CD4-positive, alpha-beta memory T cell (primary cell): ENCODE measurements at regions of chr19 and their contacts with region 1.

Region 1: GRCh38 chr19:49570138-49570856 is 10.1 kb downstream of the NOSIP start:
- DNase-seq: peak; percentile 82 to 85 (median 84)
- H3K4me3 ChIP-seq: no peak overlapping the region
- H3K4me3 Mint-ChIP-seq: peak overlapping the region; percentile 68 to 91 (median 78)
- H3K27ac ChIP-seq: no peak overlapping the region
- H3K27ac Mint-ChIP-seq: peak overlapping the region; percentile 90 to 98 (median 95)
- H3K4me1 ChIP-seq: peaks cover 64% of the 10 kb centered on the region
- H3K4me1 Mint-ChIP-seq: peaks cover 34 to 64% (median 47%) of the 10 kb centered on the region in 4 donors
- H3K27me3 ChIP-seq: no peaks in the 10 kb centered on the region
- H3K27me3 Mint-ChIP-seq: no peaks in the 10 kb centered on the region

Region 2: GRCh38 chr19:49473868-49474544 is 96.3 kb before region 1 on chr19 and contains the start of gene FLT3LG:
- CTCF ChIA-PET with region 1: interaction called, 17 read pairs
- POLR2A ChIA-PET with region 1: interaction called, 13 read pairs
- intact Hi-C with region 1: loop called (anchors 1 kb)
- DNase-seq: peak; percentile 96 to 97 (median 97)
- H3K4me3 ChIP-seq: peak within 1 kb of the TSS; percentile 77 to 94
- H3K4me3 Mint-ChIP-seq: peak within 1 kb of the TSS; percentile 90 to 99 (median 94)
- H3K27ac ChIP-seq: peak within 1 kb of the TSS; percentile 96
- H3K27ac Mint-ChIP-seq: peak within 1 kb of the TSS; percentile 91 to 99 (median 98)
- H3K4me1 ChIP-seq: peaks cover 64% of the 10 kb centered on the region
- H3K4me1 Mint-ChIP-seq: peaks cover 27 to 71% (median 46%) of the 10 kb centered on the region in 4 donors
- H3K27me3 ChIP-seq: no peaks in the 10 kb centered on the region
- H3K27me3 Mint-ChIP-seq: no peaks in the 10 kb centered on the region
- total RNA-seq, gene FLT3LG: 114 to 115 TPM

Region 3: DNA sequence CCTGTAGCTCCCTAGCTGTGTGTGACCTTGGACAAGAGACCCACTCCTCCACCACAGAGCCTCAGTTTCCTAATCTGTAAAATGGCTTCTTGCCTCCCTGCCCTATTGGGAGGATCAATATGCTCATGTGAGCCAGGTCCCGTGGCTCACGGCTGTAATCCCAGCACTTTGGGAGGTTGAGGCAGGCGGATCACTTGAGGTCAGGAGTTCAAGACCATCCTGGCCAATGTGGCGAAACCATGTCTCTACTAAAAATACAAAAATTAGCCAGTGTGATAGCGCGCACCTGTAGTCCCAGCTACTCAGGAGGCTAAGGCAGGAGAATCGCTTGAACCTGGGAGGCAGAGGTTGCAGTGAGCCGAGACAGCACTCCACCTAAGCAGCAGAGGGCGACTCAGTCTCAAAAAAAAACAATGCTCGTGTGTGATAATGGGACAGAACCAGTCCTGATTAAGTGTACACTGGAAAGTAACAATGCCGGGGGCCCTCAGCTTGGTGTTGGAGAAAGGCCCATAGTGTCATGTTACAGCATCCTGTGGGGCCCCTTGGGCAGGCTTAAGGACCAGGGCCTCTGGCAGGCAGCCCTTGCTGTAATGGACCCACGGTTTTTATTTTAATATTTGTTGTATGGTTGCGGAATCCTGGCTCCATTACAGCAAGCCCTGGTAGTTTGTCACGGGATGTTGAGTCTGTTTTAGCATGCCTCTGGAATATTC is 67.3 kb before region 1 on chr19:
- CTCF ChIA-PET with region 1: interaction called, 6 read pairs
- POLR2A ChIA-PET with region 1: no interaction called
- intact Hi-C with region 1: loop called (anchors 1 kb)
- DNase-seq: peak; percentile 65 to 79 (median 74)
- H3K4me3 ChIP-seq: no peak overlapping the region
- H3K4me3 Mint-ChIP-seq: peak overlapping the region; percentile 6 to 100 (median 36)
- H3K27ac ChIP-seq: peak overlapping the region; percentile 95
- H3K27ac Mint-ChIP-seq: peak overlapping the region; percentile 91 to 100 (median 99)
- H3K4me1 ChIP-seq: peaks cover 52% of the 10 kb centered on the region
- H3K4me1 Mint-ChIP-seq: peaks cover 16 to 61% (median 33%) of the 10 kb centered on the region in 4 donors
- H3K27me3 ChIP-seq: no peaks in the 10 kb centered on the region
- H3K27me3 Mint-ChIP-seq: no peaks in the 10 kb centered on the region

Region 4: GRCh38 chr19:49533551-49534488 is 36.5 kb before region 1 on chr19:
- CTCF ChIA-PET with region 1: interaction called, 43 read pairs
- POLR2A ChIA-PET with region 1: interaction called, 21 read pairs
- intact Hi-C with region 1: no loop called
- DNase-seq: peak; percentile 84 to 91 (median 87)
- H3K4me3 ChIP-seq: peak overlapping the region; percentile 61 to 70
- H3K4me3 Mint-ChIP-seq: peak overlapping the region; percentile 78 to 90 (median 88)
- H3K27ac ChIP-seq: peak overlapping the region; percentile 50
- H3K27ac Mint-ChIP-seq: peak overlapping the region; percentile 17 to 92 (median 83)
- H3K4me1 ChIP-seq: peaks cover 23% of the 10 kb centered on the region
- H3K4me1 Mint-ChIP-seq: peaks cover 16 to 35% (median 22%) of the 10 kb centered on the region in 4 donors
- H3K27me3 ChIP-seq: no peaks in the 10 kb centered on the region
- H3K27me3 Mint-ChIP-seq: no peaks in the 10 kb centered on the region

Region 5: GRCh38 chr19:49580264-49581006 is 10.1 kb after region 1 on chr19 and contains the start of gene NOSIP:
- CTCF ChIA-PET with region 1: interaction called, 25 read pairs
- POLR2A ChIA-PET with region 1: interaction called, 26 read pairs
- intact Hi-C with region 1: no loop called
- DNase-seq: peak; percentile 94 to 97 (median 95)
- H3K4me3 ChIP-seq: peak within 1 kb of the TSS; percentile 54 to 99
- H3K4me3 Mint-ChIP-seq: peak within 1 kb of the TSS; percentile 90 to 97 (median 94)
- H3K27ac ChIP-seq: peak within 1 kb of the TSS; percentile 80
- H3K27ac Mint-ChIP-seq: peak within 1 kb of the TSS; percentile 85 to 96 (median 94)
- H3K4me1 ChIP-seq: peaks cover 31% of the 10 kb centered on the region
- H3K4me1 Mint-ChIP-seq: peaks cover 21 to 40% (median 28%) of the 10 kb centered on the region in 4 donors
- H3K27me3 ChIP-seq: no peaks in the 10 kb centered on the region
- H3K27me3 Mint-ChIP-seq: no peaks in the 10 kb centered on the region
- total RNA-seq, gene NOSIP: 177 to 191 TPM